ENCODE measurements at regions of chr13 and their contacts with region 1.

Region 1: DNA sequence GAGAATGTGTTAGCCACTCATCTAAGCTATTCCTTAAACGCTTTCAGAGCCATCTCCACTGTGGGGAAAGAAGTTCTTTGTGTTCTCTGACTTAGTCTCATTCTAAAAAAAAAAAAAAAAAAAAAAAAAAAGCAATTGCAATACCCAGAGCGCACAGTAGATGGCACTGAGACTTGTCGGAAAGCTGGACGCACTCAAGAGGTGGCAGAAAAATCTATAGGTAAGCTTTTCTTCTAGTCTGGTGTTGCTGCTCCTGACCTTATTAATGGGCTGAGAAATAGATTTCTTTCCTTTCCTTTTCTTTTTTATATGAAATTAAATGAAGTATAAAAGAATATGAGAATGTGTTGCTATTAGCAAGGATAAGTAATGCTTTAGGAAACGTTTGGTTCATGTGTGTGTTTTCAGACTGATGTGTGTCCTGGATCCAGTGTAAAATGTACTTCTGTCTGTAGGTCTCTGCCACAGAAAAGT is 4.7 kb upstream of the GJB2 start:
- DNase-seq: peak; percentile 41
- ATAC-seq: peak; percentile 41
- H3K4me3 Mint-ChIP-seq: no peak overlapping the region
- H3K27ac Mint-ChIP-seq: no peak overlapping the region
- H3K4me1 Mint-ChIP-seq: peaks cover 21% of the 10 kb centered on the region
- H3K27me3 Mint-ChIP-seq: peaks cover 28% of the 10 kb centered on the region

Region 2: DNA sequence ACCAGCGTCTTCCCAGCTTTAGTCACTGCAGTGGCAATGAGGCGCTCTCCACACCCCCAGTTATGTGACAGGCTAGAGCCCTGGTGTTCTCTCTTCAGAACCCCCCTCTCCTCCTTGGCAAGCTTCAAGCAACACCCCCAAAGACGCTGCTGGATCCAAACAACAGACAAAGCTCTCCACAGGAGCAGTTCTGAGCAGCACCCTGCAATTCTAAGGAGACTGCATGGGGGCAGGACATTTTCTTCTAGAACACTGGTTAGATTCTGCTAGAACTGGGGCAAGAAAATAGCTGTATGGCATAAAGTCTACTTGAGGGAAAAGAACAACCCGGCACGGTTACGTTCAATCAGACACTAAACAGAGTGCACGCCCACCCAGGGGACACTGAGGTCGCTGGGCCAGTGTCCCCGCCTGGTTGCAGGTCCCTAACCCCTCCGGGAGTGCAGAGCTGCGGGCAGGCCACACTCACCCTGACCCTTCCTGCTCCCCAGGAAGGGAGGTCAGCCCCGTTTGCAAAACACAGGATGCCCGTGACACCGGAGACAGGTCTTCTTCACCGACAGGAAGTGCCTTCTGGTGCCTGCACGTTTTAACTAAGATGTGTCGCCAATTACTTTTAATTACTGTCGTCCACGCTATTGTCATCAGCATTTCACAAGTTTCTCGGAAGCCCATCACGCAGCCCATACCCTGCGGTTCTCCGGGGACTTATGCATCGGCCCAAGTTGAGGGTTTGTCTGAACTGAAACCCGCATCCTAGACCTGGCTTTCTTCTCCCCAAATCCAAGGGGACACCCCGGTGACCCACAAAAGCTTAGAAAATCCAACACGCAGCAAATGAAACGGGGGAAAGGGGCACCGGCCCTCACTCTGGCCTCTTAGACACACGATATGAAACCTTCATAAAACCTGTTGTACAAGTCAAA is 33.8 kb after region 1 on chr13:
- CTCF ChIA-PET with region 1: interaction called, 16 read pairs
- POLR2A ChIA-PET with region 1: no interaction called
- intact Hi-C with region 1: no loop called
- DNase-seq: peak; percentile 34
- ATAC-seq: peak; percentile 45
- H3K4me3 Mint-ChIP-seq: peak overlapping the region; percentile 73
- H3K27ac Mint-ChIP-seq: peak overlapping the region; percentile 65
- H3K4me1 Mint-ChIP-seq: peaks cover 11% of the 10 kb centered on the region
- H3K27me3 Mint-ChIP-seq: peaks cover 14% of the 10 kb centered on the region

Region 3: DNA sequence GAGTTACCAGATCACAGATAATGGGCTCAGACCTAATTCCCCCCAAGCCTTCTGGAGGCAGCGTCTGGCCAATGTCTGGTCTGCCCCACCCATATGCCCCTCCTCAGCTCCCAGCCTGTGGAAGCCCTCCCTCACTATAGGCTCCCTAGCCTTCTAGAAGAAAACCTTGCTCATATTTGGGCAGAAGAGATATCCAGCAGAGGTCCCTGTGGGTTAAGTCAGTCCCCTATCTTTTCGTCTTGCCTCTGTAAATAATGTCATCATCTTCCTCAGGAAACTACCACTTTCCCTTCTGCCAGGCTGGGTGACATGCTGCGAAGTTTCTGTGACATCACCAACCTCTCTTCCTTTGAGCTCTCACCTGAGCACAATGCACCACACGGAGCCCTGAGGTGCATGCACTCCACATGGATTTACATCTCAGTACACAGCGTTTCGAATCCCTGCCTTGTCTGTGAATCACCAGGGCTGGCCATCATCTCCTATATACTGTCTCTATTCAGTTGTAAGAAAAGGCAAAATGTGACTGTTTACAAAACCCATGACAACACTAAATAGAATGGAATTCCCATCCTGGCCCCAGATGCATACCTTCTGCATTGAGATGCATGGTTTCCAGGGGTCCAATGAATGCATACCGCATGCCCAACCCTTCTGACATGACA is 215.4 kb after region 1 on chr13:
- CTCF ChIA-PET with region 1: interaction called, 5 read pairs
- POLR2A ChIA-PET with region 1: no interaction called
- intact Hi-C with region 1: loop called in 1 of 2 experiments (anchors 5 kb)
- DNase-seq: peak; percentile 59
- ATAC-seq: peak; percentile 69
- H3K4me3 Mint-ChIP-seq: no peak overlapping the region
- H3K27ac Mint-ChIP-seq: peak overlapping the region; percentile 77
- H3K4me1 Mint-ChIP-seq: peaks cover 22% of the 10 kb centered on the region
- H3K27me3 Mint-ChIP-seq: peaks cover 3% of the 10 kb centered on the region

Region 4: DNA sequence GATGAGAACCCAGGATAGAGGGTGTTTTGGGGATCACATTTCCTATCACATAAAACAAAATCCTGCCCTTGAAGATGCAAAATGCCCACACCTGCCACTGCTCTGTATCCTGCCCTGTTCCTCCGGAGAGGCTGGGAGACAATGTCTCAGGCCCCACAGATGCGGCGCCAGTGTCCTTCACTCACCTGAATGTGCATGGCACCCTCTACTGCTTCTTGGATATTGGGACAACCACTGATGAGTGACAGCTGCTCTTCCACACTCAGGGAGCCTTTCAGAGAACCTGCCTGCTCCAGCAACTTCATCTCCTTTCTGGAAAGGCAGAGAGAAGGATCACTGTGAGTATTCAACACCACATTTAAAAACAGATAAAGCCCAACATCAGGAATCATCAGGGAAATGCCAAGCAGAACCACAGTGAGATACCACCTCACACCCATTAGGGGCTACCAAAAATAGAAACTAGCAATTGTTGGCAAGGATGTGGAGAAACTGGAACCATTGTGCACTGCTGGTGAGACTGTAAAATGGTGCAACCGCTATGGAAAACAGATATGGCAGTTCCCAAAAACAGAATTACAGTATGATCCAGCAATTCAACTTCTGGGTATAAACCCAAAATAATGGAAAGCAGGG is 291.9 kb after region 1 on chr13:
- CTCF ChIA-PET with region 1: interaction called, 87 read pairs
- POLR2A ChIA-PET with region 1: no interaction called
- intact Hi-C with region 1: loop called (anchors 1 kb)
- DNase-seq: peak; percentile 85
- ATAC-seq: peak; percentile 97
- H3K4me3 Mint-ChIP-seq: no peak overlapping the region
- H3K27ac Mint-ChIP-seq: no peak overlapping the region
- H3K4me1 Mint-ChIP-seq: peaks cover 8% of the 10 kb centered on the region
- H3K27me3 Mint-ChIP-seq: no peaks in the 10 kb centered on the region

Region 5: GRCh38 chr13:20924758-20925394 is 727.5 kb after region 1 on chr13:
- CTCF ChIA-PET with region 1: interaction called, 3 read pairs
- POLR2A ChIA-PET with region 1: no interaction called
- intact Hi-C with region 1: loop called (anchors 5 to 10 kb)
- DNase-seq: peak; percentile 88
- ATAC-seq: peak; percentile 42
- H3K4me3 Mint-ChIP-seq: no peak overlapping the region
- H3K27ac Mint-ChIP-seq: no peak overlapping the region
- H3K4me1 Mint-ChIP-seq: no peaks in the 10 kb centered on the region
- H3K27me3 Mint-ChIP-seq: no peaks in the 10 kb centered on the region